Dorsolateral prefrontal cortex (tissue), 120 donors: ENCODE measurements at regions of chr1 and their contacts with region 1.

Region 1: DNA sequence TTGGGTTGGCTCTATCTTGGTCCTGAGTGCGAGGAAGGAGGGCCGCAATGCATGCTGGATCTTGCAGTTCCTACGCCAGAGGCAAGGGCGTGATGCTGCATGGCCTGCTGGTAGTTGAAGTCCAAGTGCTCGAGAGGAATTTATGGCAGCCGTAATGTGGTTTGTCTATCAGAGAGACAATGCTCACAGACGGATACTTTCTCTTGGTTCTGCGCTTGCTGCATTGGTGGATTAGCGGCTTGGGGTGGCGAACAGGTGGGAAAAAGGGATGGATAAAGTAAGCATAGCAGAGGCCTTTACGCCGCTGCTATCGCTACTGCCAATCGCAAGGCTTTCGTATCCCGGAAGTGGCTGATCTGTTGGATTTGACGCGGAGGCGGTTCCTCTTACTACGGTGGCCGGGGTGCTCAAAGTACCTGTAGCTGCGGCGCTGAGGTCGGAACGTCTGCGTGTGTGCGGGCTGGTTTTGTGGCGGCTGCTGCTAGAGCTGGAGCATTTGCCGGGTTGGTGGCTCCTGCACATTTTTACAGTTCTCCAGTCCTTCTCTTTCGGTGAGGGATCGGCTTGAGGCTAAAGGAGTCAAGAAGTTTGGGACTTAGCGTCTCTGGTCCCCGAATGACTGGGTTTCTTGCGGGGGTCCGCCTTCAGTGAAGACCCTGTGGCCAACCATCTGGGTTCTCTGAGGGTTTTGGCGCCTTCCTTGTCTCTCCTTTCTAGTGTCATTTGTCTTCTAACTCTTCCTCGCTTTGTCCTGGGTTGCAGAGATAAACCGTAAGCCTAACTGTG is at the start of gene ATG4C:
- DNase-seq: peak; percentile 94 to 99 (median 97)
- H3K4me3 ChIP-seq: peak within 1 kb of the TSS; percentile 56 to 97 (median 87)
- H3K27ac ChIP-seq: peak within 1 kb of the TSS; percentile 90 to 100 (median 98)
- H3K27me3 ChIP-seq: no peaks in the 10 kb centered on the region
- CTCF ChIP-seq: peak in 16 of 56 donors; percentile 8 to 40 (median 26)
- total RNA-seq, gene ATG4C: 16.4 to 82.3 (median 35.4) TPM

Region 2: DNA sequence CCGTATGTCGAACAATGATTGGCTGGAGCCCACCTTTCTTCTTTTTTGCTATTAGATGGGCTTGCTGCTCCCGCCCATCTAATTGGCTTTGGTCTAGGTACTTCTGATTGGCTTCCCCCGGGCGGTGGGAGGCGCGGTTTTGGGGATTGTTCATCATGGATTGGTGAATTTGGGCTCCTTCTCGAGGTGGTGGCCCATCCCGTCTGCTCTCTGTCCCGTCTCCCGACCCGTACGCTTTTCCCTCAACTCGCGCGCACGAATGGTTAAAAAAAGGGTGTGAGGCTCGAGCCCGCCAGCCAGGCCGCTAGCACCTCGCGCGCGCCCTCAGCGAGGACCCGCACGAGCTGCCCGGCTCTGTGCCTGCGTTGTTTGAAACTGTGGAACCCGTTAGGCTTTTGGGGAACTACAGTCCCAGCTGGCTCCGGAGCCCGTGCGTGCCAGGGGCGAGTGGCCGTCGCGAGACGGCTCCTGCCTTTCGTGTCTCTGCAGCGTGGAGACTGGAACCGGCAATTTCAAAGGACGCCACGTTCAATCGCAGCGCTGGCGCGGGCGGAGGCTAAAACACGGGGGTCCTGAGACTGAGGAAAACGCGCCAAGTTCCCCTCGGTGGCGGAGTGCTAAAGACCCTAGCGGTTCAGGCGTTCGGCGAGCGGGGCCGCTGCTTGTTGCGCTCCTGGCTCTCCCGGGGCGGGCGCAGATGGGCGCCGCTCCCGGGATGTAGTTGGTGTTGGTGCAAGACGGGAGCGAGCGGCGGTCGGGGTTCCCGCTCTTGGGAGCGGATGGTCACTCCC is 347.3 kb before region 1 on chr1 and contains the start of gene USP1:
- intact Hi-C with region 1: loop called in 1 of 2 experiments (anchors 2 kb)
- DNase-seq: peak; percentile 78 to 98 (median 96)
- H3K4me3 ChIP-seq: peak within 1 kb of the TSS; percentile 67 to 99 (median 92)
- H3K27ac ChIP-seq: peak within 1 kb of the TSS; percentile 72 to 100 (median 98)
- H3K27me3 ChIP-seq: no peaks in the 10 kb centered on the region
- CTCF ChIP-seq: peak in 6 of 56 donors; percentile 2 to 26 (median 8)
- total RNA-seq, gene USP1: 14.0 to 24.9 (median 20.8) TPM

Region 3: GRCh38 chr1:62676611-62677356 is 107.1 kb before region 1 on chr1:
- intact Hi-C with region 1: no loop called
- DNase-seq: no peak
- H3K4me3 ChIP-seq: no peak overlapping the region
- H3K27ac ChIP-seq: no peak overlapping the region
- H3K27me3 ChIP-seq: no peaks in the 10 kb centered on the region
- CTCF ChIP-seq: no peak

Region 4: GRCh38 chr1:62687903-62688686 is 95.8 kb before region 1 on chr1 and contains the start of gene DOCK7:
- intact Hi-C with region 1: loop called (anchors 5 kb)
- DNase-seq: peak; percentile 47 to 87 (median 70)
- H3K4me3 ChIP-seq: peak within 1 kb of the TSS; percentile 58 to 94 (median 81)
- H3K27ac ChIP-seq: peak within 1 kb of the TSS in 57 of 59 donors; percentile 49 to 94 (median 84)
- H3K27me3 ChIP-seq: no peaks in the 10 kb centered on the region
- CTCF ChIP-seq: peak in 1 of 56 donors; percentile 7
- total RNA-seq, gene DOCK7: 39.8 to 134 (median 64.9) TPM

Region 5: GRCh38 chr1:62746085-62746808 is 37.7 kb before region 1 on chr1:
- intact Hi-C with region 1: no loop called
- DNase-seq: no peak
- H3K4me3 ChIP-seq: peak overlapping the region in 33 of 59 donors; percentile 4 to 59 (median 27)
- H3K27ac ChIP-seq: no peak overlapping the region
- H3K27me3 ChIP-seq: no peaks in the 10 kb centered on the region
- CTCF ChIP-seq: peak; percentile 54 to 93 (median 76)

Region 6: DNA sequence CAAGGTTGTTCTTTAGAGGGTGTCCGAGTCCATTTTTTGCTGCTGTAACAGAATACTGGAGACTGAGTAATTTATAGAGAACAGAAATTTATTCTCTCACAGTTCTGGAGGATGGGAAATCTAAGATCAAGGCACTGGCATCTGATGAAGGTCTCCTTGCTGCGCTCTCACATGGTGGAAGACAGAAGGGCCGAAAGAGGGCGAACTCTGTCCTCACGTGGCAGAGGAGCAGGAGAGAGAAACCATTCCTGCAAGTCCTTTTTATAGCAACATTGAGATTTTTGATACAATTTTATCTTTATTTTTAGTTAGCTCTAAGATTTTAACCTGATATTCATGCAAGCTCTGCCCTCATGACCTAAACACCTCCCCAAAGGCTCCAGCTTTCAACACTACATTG is 48.4 kb after region 1 on chr1:
- intact Hi-C with region 1: loop called in 1 of 2 experiments (anchors 5 kb)
- DNase-seq: peak in 6 of 10 donors; percentile 19 to 56 (median 48)
- H3K4me3 ChIP-seq: no peak overlapping the region
- H3K27ac ChIP-seq: peak overlapping the region in 25 of 59 donors; percentile 0 to 70 (median 33)
- H3K27me3 ChIP-seq: no peaks in the 10 kb centered on the region
- CTCF ChIP-seq: peak in 33 of 56 donors; percentile 9 to 62 (median 35)